ENCODE measurements at regions of chr19 and their contacts with region 1.

Region 1: DNA sequence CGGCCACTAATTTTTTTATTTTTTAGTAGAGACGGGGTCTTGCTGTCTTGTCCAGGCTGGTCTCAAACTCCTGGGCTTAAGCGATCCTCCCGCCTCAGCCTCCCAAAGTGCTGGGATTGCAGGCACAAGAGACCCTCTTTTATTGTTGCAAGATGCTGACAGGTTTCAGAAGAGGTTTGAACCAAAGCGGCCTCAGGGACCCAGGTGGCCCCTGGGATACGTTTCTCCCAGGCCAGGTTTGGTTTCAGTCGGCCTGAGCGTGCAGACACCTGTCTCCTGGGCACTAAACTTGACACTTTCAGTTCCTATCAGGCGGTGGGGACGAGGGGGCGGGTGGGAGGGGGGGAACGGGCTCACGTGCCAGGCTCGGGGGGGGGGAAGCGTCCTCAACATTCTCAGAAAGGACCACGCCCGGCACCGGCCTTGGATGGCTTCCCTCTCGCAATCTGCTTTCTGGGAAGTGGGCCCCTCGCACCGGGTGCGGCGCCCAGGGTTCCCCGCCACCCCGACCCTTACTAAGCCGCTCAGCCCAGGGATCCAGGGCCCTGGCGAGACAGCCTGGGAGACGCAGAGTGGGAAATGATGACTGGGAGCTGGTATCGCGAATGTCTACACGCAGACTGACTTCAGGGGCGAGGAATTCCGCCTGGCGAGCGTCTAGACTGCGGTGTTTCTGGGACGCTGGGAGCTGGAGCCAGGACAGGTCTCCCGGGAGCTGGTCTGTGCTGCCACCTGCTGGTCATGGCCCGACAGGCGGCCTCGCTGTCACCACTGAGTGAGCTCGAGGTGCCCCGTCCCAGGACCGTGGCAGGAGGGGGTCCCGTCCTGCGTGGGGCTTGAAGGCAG is 91.6 kb downstream of the GNG7 start:
- DNase-seq: peak; percentile 72
- H3K4me3 ChIP-seq: peak overlapping the region in 2 of 3 experiments; percentile 35 to 41
- H3K27ac ChIP-seq: no peak overlapping the region
- H3K4me1 ChIP-seq: peaks cover 6% of the 10 kb centered on the region
- H3K27me3 ChIP-seq: no peaks in the 10 kb centered on the region
- CTCF ChIP-seq: peak; percentile 84 to 99

Region 2: GRCh38 chr19:2151339-2152229 is 459.3 kb before region 1 on chr19 and contains the start of gene AP3D1:
- CTCF ChIA-PET with region 1: no interaction called
- dilution Hi-C with region 1: no loop called
- in situ Hi-C with region 1: no loop called
- intact Hi-C with region 1: loop called (anchors 1 kb)
- DNase-seq: peak; percentile 100
- H3K4me3 ChIP-seq: peak within 1 kb of the TSS; percentile 91 to 100 (median 98)
- H3K27ac ChIP-seq: peak within 1 kb of the TSS; percentile 72
- H3K4me1 ChIP-seq: peaks cover 32% of the 10 kb centered on the region
- H3K27me3 ChIP-seq: no peaks in the 10 kb centered on the region
- CTCF ChIP-seq: no peak
- total RNA-seq, gene AP3D1: 124 to 143 TPM

Region 3: DNA sequence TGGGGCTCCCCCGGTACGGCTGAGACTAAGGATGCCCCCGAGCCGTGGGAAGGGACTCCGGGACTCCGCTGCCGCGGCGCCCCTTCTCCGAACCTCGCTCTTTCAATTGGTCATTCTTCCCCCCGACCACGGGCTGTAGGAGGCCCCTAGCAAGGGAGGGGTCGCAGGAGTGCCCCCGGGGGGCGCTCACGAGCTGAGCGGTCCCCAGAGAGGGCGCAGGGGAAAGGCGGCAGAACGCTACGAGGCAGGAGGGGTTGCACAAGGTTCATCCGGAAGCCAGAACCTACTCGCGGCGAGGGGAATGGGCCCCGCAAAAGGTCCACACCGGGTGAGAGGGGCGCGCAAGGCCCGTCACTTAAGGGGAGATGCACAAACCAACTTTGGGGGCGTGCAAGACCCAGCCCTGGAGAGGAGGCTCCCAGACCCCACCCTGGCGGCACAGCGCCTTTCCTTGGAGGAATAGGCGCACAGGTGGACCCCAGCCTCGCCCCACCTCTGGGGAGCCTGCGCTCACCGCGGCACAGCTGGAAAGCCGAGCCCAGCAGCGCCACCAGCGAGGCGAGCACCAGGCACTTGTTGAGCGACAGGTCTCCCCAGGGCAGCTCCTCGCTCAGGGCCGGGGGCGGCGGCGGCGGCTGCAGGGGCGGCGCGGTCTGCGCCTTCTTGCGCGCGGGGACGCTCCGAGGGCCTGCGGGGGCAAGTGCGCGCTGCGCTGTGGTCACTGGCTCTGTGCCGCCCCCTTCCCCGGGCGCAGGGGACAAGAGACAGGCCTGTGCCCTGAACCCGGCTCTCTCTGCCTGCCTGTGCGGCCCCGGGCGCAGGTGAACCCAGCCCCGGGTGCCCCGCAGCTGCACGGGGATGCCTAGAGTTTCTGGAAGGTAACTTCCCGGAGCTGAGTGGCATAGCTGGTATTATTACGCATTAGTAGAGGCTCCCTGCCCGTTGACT is 357.5 kb before region 1 on chr19:
- CTCF ChIA-PET with region 1: no interaction called
- dilution Hi-C with region 1: no loop called
- in situ Hi-C with region 1: no loop called
- intact Hi-C with region 1: no loop called
- DNase-seq: no peak
- H3K4me3 ChIP-seq: no peak overlapping the region
- H3K27ac ChIP-seq: no peak overlapping the region
- H3K4me1 ChIP-seq: peaks cover 3% of the 10 kb centered on the region
- H3K27me3 ChIP-seq: peaks cover 28% of the 10 kb centered on the region
- CTCF ChIP-seq: no peak

Region 4: GRCh38 chr19:2427429-2428320 is 183.2 kb before region 1 on chr19 and contains the start of gene TIMM13:
- CTCF ChIA-PET with region 1: no interaction called
- dilution Hi-C with region 1: no loop called
- in situ Hi-C with region 1: no loop called
- intact Hi-C with region 1: loop called (anchors 2 kb)
- DNase-seq: peak; percentile 92
- H3K4me3 ChIP-seq: peak within 1 kb of the TSS; percentile 53 to 99 (median 77)
- H3K27ac ChIP-seq: peak within 1 kb of the TSS; percentile 74
- H3K4me1 ChIP-seq: peaks cover 23% of the 10 kb centered on the region
- H3K27me3 ChIP-seq: no peaks in the 10 kb centered on the region
- CTCF ChIP-seq: no peak
- total RNA-seq, gene TIMM13: 20.8 to 133 TPM

Region 5: DNA sequence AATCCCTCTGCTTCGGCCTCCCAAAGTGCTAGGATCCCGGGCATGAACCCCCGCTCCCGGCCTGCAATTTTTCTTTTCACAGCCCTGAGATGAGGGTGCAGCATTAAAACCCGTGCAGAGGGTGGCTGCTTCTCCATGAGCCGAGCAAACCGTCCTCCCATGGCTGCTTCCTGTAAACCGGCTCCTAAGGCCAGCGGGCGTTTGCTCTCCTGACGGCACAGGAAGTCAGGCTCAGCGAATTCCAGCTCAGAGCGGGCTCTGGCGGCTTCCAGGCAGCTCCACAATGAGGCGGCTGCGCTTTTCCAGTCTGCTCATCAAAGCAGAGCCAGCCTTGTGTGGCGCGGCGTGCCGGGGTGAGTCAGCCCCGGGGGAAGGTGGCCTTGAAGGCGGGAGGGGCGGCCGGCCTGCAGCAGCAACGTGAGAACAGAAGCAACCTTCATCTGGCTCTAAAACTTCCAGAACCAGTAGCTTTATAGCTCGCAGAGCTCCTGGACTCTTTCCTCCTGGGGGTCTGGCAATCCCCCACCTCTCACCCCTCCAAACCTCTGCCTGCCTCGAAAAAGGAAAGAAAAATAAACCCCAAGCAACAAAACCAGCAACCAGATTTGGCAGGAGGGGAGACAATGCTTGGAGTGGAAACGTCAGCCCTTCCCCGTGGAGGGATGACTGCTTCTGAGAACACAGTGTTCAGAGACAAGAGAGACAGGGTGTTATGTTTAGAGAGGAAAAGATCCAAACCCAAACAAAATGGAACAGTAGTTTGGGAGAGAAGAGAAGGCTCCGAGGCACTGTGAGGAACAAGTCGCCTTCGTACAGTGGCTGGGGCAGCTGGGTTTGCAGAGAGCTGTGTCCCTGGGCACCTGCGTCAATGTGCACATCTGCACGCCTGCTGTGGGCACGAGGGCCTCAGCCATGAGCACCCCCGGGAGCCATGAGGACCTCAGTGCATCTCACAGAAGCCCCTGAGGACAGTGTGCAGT is 67.1 kb before region 1 on chr19:
- CTCF ChIA-PET with region 1: interaction called, 3 read pairs
- dilution Hi-C with region 1: no loop called
- in situ Hi-C with region 1: no loop called
- intact Hi-C with region 1: loop called (anchors 2 kb)
- DNase-seq: peak; percentile 96
- H3K4me3 ChIP-seq: no peak overlapping the region
- H3K27ac ChIP-seq: peak overlapping the region; percentile 51
- H3K4me1 ChIP-seq: peaks cover 36% of the 10 kb centered on the region
- H3K27me3 ChIP-seq: no peaks in the 10 kb centered on the region
- CTCF ChIP-seq: peak; percentile 6 to 56

Region 6: DNA sequence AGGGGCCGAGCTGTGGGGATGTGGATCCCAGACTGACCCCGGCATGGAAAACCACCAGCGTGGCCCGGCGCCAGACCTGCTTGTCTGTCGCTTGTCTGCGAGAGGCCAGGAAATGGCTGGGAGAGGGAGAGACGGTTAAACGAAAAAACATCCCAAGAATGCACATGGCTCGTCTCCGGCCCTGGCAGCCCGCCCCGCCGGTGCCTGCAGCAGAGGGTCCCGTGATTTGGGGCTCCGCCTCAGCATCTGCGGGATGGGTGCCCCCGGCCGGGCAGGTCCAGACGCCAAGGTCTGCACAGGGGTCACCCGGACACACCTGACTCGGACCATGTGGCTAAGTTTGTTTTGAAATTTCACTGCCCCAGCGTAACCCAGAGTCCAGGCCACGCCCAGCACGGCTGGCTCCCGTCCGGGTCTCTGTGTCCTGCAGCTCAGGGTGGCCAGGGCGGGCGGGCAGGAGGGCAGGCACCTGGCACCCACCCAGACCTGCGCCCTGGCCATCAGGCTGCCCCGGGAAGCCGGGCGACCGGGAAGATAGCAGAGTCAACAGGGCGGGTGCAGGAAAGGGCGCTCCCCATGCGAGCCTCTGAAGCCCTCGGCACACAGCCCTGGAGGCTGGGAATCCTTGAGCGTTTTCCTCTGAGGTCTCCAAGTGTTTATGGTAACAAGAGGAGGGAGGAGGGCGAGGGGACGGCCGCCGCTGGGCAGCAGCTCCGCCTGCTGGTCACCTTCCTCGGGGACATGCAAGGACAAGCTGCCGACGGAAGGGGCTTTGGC is 31.8 kb before region 1 on chr19:
- CTCF ChIA-PET with region 1: interaction called, 5 read pairs
- dilution Hi-C with region 1: no loop called
- in situ Hi-C with region 1: no loop called
- intact Hi-C with region 1: loop called (anchors 1 kb)
- DNase-seq: peak; percentile 69
- H3K4me3 ChIP-seq: peak overlapping the region; percentile 26 to 53 (median 50)
- H3K27ac ChIP-seq: no peak overlapping the region
- H3K4me1 ChIP-seq: peaks cover 20% of the 10 kb centered on the region
- H3K27me3 ChIP-seq: no peaks in the 10 kb centered on the region
- CTCF ChIP-seq: peak; percentile 62 to 87

Region 7: GRCh38 chr19:2636897-2637683 is 26.2 kb after region 1 on chr19:
- CTCF ChIA-PET with region 1: interaction called, 14 read pairs
- dilution Hi-C with region 1: no loop called
- in situ Hi-C with region 1: no loop called
- intact Hi-C with region 1: loop called (anchors 2 kb)
- DNase-seq: no peak
- H3K4me3 ChIP-seq: no peak overlapping the region
- H3K27ac ChIP-seq: no peak overlapping the region
- H3K4me1 ChIP-seq: peaks cover 11% of the 10 kb centered on the region
- H3K27me3 ChIP-seq: no peaks in the 10 kb centered on the region
- CTCF ChIP-seq: peak; percentile 55 to 92

Region 8: DNA sequence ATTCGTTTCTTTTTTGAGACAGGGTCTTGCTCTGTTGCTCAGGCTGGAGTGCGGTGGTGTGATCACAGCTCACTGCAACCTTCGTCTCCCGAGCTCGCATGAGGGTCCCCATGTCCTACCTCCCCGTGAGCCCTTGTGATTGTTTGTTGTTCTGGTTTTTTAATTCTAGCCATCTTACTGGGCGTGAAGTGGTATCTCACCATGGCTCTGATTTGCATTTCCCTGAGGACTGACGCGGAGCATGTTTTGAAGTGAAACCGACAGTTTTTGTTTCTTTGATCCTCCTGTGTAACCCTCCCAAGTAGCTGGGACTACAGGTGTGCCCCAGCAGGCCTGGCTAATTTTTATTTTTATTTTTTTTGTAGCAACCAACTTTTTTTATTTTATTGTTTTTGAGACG is 69.9 kb after region 1 on chr19:
- CTCF ChIA-PET with region 1: no interaction called
- dilution Hi-C with region 1: no loop called
- in situ Hi-C with region 1: no loop called
- intact Hi-C with region 1: no loop called
- DNase-seq: no peak
- H3K4me3 ChIP-seq: no peak overlapping the region
- H3K27ac ChIP-seq: no peak overlapping the region
- H3K4me1 ChIP-seq: no peaks in the 10 kb centered on the region
- H3K27me3 ChIP-seq: peaks cover 5% of the 10 kb centered on the region
- CTCF ChIP-seq: no peak

Region 9: DNA sequence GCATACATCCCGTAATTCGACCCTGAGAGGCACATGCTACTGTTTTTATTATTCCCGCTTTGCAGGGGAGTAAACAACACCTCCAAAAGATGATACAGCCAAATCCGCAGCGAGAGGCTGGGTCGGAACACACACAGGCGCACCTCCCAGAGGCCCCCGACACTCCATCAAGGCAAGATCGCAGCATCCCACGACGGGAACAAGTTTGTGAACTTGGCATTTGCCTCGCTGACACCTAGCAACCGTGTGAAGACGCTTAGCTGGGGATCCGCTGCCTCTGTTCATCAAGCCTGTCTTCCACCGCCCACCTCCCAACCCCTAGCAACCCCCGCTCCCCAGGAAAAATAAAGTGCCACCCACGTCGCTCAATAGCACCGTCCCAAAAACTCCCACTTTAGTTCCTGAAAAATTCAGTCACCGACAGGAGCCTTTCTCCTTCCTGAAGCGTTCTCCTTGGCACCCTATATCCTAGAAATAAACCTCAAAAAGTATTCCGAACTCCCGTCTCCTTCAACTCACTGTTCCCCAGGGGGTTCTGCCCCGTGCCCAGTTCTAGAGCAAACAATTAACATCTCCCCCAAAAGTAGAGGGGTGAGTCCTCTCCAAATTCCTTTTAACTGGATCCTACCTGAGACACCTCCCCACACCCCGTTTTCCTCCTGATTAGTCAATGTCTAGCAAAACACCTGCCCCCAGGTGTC is 90.0 kb after region 1 on chr19:
- CTCF ChIA-PET with region 1: no interaction called
- dilution Hi-C with region 1: no loop called
- in situ Hi-C with region 1: no loop called
- intact Hi-C with region 1: no loop called
- DNase-seq: no peak
- H3K4me3 ChIP-seq: no peak overlapping the region
- H3K27ac ChIP-seq: no peak overlapping the region
- H3K4me1 ChIP-seq: no peaks in the 10 kb centered on the region
- H3K27me3 ChIP-seq: peaks cover 13% of the 10 kb centered on the region
- CTCF ChIP-seq: no peak

Region 10: GRCh38 chr19:2739602-2740313 is 128.9 kb after region 1 on chr19 and contains the start of gene SLC39A3:
- CTCF ChIA-PET with region 1: no interaction called
- dilution Hi-C with region 1: no loop called
- in situ Hi-C with region 1: no loop called
- intact Hi-C with region 1: no loop called
- DNase-seq: peak; percentile 96
- H3K4me3 ChIP-seq: peak within 1 kb of the TSS; percentile 88 to 92 (median 92)
- H3K27ac ChIP-seq: no peak within 1 kb of the TSS
- H3K4me1 ChIP-seq: no peaks in the 10 kb centered on the region
- H3K27me3 ChIP-seq: no peaks in the 10 kb centered on the region
- CTCF ChIP-seq: peak in 1 of 2 donors; percentile 26
- total RNA-seq, gene SLC39A3: 32.6 to 34.7 TPM